HepG2 (cell line): ENCODE measurements at regions of chr7 and their contacts with region 1.

Region 1: DNA sequence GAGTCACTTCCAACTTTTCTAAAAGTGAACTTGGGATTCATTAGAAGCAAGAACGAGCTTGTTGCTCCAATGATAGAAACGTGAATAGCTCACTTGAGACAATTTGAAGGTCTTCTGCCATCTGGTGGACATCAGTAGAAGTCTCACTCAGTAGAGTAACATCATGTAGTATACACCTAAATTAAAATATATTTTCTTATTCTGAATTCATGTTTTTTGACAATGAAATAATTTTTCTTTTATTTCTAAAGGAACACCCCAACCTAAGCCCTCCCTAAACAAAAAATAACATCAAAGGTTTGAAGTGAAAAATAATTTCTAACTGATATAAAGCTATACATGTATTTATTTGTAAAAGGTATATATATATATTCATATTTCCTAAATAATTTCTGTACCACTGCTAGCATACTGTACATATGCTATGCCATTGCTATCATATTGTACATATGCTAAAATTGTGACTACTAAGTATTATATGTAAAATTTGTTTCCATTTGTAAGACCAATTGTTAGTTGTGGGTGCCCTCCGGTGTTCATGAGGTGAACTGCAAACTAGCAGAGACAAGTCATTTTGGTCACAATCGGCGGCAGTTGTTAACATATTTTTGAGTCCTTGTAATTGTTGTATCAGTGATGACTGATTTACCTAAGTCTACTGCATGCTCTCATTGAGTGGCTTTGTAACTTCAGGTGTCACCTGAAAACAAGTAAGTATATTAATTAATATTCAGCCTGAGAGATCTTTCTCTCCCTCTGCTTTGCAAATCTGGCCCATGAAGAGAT is 121.9 kb downstream of the PTPRZ1 start:
- DNase-seq: peak; percentile 70
- ATAC-seq: peak; percentile 90
- H3K4me3 ChIP-seq: no peak overlapping the region
- H3K27ac ChIP-seq: no peak overlapping the region
- H3K4me1 ChIP-seq: no peaks in the 10 kb centered on the region
- H3K27me3 ChIP-seq: no peaks in the 10 kb centered on the region
- CTCF ChIP-seq: peak; percentile 71
- EP300 ChIP-seq: no peak
- POLR2A ChIP-seq: no peak
- RAD21 ChIP-seq: peak; percentile 59; the same call in 1 of the 2 replicates

Region 2: DNA sequence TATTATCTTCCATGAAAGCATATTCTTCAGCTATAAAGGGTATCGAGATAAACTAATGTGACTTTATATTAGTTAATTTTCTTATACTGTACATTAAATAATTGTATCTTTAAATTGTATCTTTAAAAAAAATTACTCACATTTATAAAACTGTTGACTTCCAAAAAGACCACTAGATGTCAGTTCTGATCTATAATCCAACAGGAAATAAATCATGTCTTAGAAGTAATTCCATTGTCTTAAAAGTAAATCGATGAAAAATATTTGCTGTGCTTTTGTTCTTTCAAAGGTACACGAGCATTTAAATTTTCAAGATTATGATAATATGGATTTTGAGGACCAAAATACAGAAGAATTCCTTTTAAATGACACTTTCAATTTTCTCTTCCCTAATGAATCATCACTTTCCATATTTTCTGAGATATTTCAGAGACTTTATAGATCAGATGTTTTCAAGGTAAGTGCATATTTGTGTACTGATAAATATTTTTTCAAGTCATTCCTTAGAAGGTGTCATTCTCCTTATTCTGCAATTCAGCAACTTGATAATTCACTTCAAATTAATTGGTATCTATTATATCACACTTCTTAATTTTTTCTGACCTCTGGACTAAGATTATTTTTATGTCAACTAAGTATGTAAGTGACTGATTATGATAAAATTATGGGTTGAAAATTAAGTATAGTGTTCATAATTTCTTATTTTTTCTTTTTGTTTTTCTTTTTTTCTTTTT is 867.9 kb before region 1 on chr7:
- CTCF ChIA-PET with region 1: no interaction called
- POLR2A ChIA-PET with region 1: no interaction called
- in situ Hi-C with region 1: loop called (anchors 25 kb)
- intact Hi-C with region 1: loop called (anchors 5 kb)
- DNase-seq: no peak
- ATAC-seq: no peak
- H3K4me3 ChIP-seq: no peak overlapping the region
- H3K27ac ChIP-seq: no peak overlapping the region
- H3K4me1 ChIP-seq: no peaks in the 10 kb centered on the region
- H3K27me3 ChIP-seq: no peaks in the 10 kb centered on the region; a peak in 1 of 5 replicates
- CTCF ChIP-seq: no peak
- EP300 ChIP-seq: no peak
- POLR2A ChIP-seq: no peak
- RAD21 ChIP-seq: no peak

Region 3: DNA sequence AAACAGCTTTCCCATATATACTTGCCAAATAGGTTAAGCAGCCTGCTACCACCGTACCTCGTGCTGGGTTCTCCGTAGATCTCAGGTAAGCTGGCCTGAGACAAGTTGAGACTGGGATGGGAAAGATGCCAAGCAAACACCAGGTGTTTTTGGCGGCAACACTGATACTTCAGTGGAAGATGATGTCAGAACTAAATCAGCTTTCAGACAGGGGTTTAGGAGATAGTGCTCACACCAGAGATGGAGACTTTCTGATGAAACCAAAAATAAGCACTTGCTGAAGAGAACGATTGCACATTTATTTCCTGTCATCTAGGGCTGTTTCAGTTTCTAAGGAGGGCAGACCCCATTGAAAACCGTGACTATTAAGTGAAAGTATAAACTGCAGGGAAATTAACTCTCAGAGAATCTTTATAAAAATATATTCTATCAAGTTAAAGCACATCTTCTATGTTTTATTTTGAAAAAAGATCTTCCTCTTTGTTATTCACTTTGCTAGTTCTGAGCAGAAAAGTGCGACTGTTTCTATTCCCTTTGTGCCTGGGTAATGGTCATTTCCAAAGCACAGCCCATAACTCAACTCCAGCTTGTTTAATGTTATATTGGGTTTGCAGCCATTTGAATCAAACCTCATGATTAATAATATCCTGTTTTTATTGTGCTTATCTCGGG is 856.4 kb before region 1 on chr7:
- CTCF ChIA-PET with region 1: no interaction called
- POLR2A ChIA-PET with region 1: no interaction called
- in situ Hi-C with region 1: loop called (anchors 25 kb)
- intact Hi-C with region 1: no loop called
- DNase-seq: no peak
- ATAC-seq: no peak
- H3K4me3 ChIP-seq: no peak overlapping the region
- H3K27ac ChIP-seq: no peak overlapping the region
- H3K4me1 ChIP-seq: no peaks in the 10 kb centered on the region
- H3K27me3 ChIP-seq: no peaks in the 10 kb centered on the region; a peak in 1 of 5 replicates
- CTCF ChIP-seq: no peak
- EP300 ChIP-seq: no peak
- POLR2A ChIP-seq: no peak
- RAD21 ChIP-seq: no peak

Region 4: DNA sequence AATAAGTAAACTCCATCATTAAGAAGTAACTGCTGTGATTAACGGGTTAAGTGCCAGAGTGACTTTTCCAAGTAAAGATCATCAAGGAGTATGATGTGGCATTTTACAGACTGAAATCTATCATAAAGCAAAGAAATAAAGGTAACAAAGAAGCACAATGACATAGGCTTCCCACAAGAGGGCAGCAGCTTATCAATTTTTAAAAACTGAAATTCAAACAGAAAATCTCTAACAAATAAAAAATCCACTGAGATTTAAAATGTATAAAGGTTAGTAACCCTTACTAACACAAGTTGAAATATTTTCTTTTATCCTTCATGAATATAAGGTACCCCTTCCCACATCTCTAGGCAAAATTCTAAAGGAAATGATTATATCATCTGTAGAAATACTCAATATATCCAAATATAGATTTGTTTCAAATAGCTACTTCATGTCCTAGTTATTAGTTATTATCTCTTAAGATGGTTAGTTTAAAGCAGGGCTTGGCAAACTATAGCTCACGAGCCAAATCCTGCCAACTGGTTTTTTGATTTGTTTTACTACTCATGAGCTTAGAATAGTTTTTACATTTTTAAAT is 627.9 kb before region 1 on chr7:
- CTCF ChIA-PET with region 1: interaction called, 8 read pairs
- POLR2A ChIA-PET with region 1: no interaction called
- in situ Hi-C with region 1: loop called (anchors 10 kb)
- intact Hi-C with region 1: loop called (anchors 2 kb)
- DNase-seq: peak; percentile 18
- ATAC-seq: no peak
- H3K4me3 ChIP-seq: no peak overlapping the region
- H3K27ac ChIP-seq: no peak overlapping the region
- H3K4me1 ChIP-seq: no peaks in the 10 kb centered on the region
- H3K27me3 ChIP-seq: no peaks in the 10 kb centered on the region
- CTCF ChIP-seq: peak; percentile 61
- EP300 ChIP-seq: no peak
- POLR2A ChIP-seq: no peak
- RAD21 ChIP-seq: 0 out of 2 replicates have a peak, but pooled peaks have one; percentile 31

Region 5: GRCh38 chr7:121547544-121548092 is 447.2 kb before region 1 on chr7:
- CTCF ChIA-PET with region 1: interaction called, 7 read pairs
- POLR2A ChIA-PET with region 1: no interaction called
- in situ Hi-C with region 1: no loop called
- intact Hi-C with region 1: loop called (anchors 10 kb)
- DNase-seq: peak; percentile 44
- ATAC-seq: peak; percentile 84
- H3K4me3 ChIP-seq: no peak overlapping the region
- H3K27ac ChIP-seq: no peak overlapping the region
- H3K4me1 ChIP-seq: no peaks in the 10 kb centered on the region
- H3K27me3 ChIP-seq: no peaks in the 10 kb centered on the region
- CTCF ChIP-seq: peak; percentile 77
- EP300 ChIP-seq: no peak
- POLR2A ChIP-seq: no peak
- RAD21 ChIP-seq: no peak

Region 6: DNA sequence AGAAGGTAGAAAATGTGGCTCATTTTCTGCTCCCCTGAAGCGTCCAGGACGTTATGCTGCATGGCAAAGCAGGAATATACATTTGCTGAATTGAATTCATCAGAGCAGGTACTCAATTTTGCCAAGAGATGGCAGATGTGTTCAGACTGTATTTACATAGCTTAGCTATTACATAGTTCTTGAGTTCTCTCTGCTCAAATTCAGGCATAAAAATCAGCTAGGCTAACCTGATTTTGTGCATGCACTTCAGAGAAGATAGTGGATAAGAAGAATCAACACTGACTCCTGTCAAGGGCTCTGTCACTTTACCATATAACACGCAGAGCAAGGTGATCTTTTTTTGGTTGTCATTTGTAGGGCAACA is 389.5 kb before region 1 on chr7:
- CTCF ChIA-PET with region 1: interaction called, 6 read pairs
- POLR2A ChIA-PET with region 1: no interaction called
- in situ Hi-C with region 1: loop called (anchors 10 kb)
- intact Hi-C with region 1: loop called (anchors 1 kb)
- DNase-seq: peak; percentile 9
- ATAC-seq: peak; percentile 71
- H3K4me3 ChIP-seq: no peak overlapping the region
- H3K27ac ChIP-seq: no peak overlapping the region
- H3K4me1 ChIP-seq: peaks cover 14% of the 10 kb centered on the region; the same call in 1 of the 2 replicates
- H3K27me3 ChIP-seq: no peaks in the 10 kb centered on the region
- CTCF ChIP-seq: peak; percentile 42; the same call in 1 of the 2 replicates
- EP300 ChIP-seq: no peak
- POLR2A ChIP-seq: no peak
- RAD21 ChIP-seq: no peak

Region 7: DNA sequence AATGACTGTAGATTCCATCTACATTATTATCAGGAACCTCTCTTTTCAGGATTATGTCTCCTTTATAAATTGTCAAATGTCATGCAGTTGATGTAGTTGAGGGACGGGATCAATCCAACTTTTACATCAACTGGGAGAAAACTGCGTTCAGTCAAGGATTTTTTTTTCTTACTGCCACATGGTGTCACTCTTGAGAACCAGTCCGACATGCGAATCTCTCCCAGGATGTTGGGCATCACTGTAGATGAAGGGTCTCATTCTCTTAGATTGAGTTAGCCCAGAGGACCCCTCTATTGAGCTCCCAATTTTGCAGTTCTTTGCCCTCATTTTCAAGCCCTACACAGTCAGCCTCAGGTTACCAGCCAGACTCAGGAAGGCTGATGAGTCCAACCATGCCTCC is 242.1 kb before region 1 on chr7:
- CTCF ChIA-PET with region 1: interaction called, 25 read pairs
- POLR2A ChIA-PET with region 1: no interaction called
- in situ Hi-C with region 1: loop called (anchors 10 kb)
- intact Hi-C with region 1: loop called (anchors 1 kb)
- DNase-seq: peak; percentile 5
- ATAC-seq: peak; percentile 50; the same call in 2 of the 3 replicates
- H3K4me3 ChIP-seq: no peak overlapping the region
- H3K27ac ChIP-seq: no peak overlapping the region
- H3K4me1 ChIP-seq: no peaks in the 10 kb centered on the region
- H3K27me3 ChIP-seq: no peaks in the 10 kb centered on the region; a peak in 1 of 5 replicates
- CTCF ChIP-seq: peak; percentile 66
- EP300 ChIP-seq: no peak
- POLR2A ChIP-seq: no peak
- RAD21 ChIP-seq: no peak